ENCODE measurements at regions of chr7 and their contacts with region 1.

Region 1: GRCh38 chr7:134605973-134606923 is 40.4 kb upstream of the BPGM start:
- DNase-seq: peak; percentile 76
- ATAC-seq: peak; percentile 98
- H3K4me3 Mint-ChIP-seq: no peak overlapping the region
- H3K27ac Mint-ChIP-seq: no peak overlapping the region
- H3K4me1 Mint-ChIP-seq: peaks cover 3% of the 10 kb centered on the region
- H3K27me3 Mint-ChIP-seq: peaks cover 28% of the 10 kb centered on the region
- CTCF ChIP-seq: peak; percentile 89

Region 2: DNA sequence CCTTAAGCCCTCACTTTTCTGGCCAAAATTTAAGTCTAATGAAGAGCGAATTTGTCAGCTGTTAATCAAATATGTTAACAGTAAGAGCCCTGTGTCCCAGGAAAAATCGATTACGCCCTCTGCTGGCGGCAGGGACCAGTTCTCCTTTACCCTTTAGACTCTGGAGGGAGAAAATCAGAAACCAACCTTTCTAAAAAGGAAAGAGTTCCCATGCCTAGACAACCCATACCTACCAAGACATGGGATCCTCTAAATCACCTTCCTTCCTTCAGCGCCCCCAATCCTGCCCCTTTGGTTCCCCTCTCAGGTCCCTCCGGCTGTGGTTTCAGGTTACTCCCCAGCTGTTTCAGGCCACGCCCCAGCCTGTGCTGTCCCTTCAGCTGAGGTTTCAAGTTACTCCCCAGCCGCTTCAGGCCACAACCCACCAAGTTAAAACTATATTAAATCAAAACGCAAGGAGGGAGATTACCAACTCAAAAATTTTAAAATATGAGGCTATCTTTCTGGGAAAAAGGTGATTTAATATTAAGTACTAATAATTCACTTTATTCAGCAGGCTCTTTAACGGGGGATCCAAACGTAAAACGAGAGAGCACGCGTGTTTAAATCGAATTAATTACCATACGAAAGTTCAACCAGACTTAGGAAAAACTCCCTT is 58.7 kb before region 1 on chr7:
- CTCF ChIA-PET with region 1: interaction called, 14 read pairs
- POLR2A ChIA-PET with region 1: no interaction called
- intact Hi-C with region 1: no loop called
- DNase-seq: peak; percentile 80
- ATAC-seq: peak; percentile 83
- H3K4me3 Mint-ChIP-seq: no peak overlapping the region
- H3K27ac Mint-ChIP-seq: no peak overlapping the region
- H3K4me1 Mint-ChIP-seq: no peaks in the 10 kb centered on the region
- H3K27me3 Mint-ChIP-seq: peaks cover 16% of the 10 kb centered on the region
- CTCF ChIP-seq: peak; percentile 74

Region 3: DNA sequence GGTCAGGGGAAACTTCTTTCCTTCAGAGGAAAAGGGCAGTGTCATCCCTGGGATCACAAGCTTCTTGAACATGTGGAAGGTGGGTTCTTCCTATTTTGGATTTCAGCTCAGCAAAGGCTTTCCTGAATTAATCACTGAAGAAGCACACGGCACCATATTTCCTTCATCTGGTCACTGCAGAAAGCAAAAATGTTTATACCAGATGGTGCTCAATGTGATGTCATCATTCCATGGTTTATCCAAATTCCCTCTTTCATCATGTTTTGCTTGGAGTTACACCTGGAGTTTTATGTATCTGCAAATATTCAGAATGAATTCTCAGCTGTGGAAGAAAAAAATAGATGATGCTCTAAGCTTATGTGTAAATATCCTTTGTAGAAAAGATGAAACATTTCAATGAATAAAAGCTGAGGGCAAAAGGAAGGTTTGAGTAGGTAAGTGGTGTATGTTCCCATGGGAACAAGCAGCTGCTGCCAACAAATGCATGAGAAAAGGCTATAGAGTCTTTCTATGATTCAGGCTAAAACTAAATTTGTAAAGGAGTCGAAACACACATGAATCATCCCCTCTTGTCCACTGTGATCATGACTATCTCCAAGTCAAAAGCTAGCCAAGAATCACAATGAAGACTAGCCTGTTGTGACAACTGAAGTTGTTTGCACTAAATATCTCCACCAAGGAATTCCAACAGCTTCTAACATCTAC is 13.5 kb after region 1 on chr7:
- CTCF ChIA-PET with region 1: interaction called, 10 read pairs
- POLR2A ChIA-PET with region 1: no interaction called
- intact Hi-C with region 1: no loop called
- DNase-seq: no peak
- ATAC-seq: no peak
- H3K4me3 Mint-ChIP-seq: no peak overlapping the region
- H3K27ac Mint-ChIP-seq: no peak overlapping the region
- H3K4me1 Mint-ChIP-seq: peaks cover 2% of the 10 kb centered on the region
- H3K27me3 Mint-ChIP-seq: peaks cover 49% of the 10 kb centered on the region
- CTCF ChIP-seq: no peak

Region 4: DNA sequence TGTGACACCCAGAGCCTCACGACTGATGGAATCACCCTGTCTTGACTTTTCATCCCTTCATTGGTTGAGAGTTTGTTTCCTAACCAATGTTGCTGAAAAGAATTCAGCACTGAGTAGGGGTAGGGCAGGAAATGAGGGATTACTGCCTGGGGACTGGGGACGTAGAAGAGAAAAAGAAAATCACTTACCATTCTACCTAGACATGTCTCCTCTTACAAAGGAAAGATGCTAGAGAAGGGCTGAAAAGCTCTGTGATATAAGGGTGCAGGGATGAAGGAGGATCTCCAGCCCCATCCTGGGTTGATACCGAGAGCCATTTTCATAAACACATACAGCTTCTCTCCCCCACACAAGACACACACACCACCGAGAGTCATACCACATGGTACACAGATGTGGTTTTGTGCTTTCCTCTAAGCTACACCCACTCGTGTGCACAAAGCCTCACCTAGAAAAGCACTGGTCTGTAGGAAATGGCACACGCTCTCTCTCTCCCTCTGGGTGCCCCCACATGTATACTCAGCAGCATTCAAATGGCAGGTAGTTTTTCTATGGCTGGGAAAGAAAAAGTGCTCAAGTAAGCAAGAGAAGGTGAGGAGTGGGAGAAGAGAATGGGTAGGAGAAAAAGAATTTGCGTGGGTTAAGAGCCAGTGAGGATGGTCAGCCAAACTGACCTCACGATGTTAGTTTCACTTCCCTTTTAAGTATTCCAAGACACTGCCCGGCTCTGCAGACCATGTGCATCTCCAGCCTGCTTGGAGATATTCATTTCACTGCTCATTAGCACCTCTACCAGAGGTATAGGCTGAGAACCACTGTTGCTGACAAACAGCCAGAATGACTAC is 259.0 kb after region 1 on chr7:
- CTCF ChIA-PET with region 1: no interaction called
- POLR2A ChIA-PET with region 1: no interaction called
- intact Hi-C with region 1: no loop called
- DNase-seq: peak; percentile 67
- ATAC-seq: peak; percentile 92
- H3K4me3 Mint-ChIP-seq: peak overlapping the region; percentile 46
- H3K27ac Mint-ChIP-seq: peak overlapping the region; percentile 78
- H3K4me1 Mint-ChIP-seq: peaks cover 20% of the 10 kb centered on the region
- H3K27me3 Mint-ChIP-seq: no peaks in the 10 kb centered on the region
- CTCF ChIP-seq: no peak